Transverse colon (tissue), 4 donors: ENCODE measurements at regions of chr14 and their contacts with region 1.

Region 1: DNA sequence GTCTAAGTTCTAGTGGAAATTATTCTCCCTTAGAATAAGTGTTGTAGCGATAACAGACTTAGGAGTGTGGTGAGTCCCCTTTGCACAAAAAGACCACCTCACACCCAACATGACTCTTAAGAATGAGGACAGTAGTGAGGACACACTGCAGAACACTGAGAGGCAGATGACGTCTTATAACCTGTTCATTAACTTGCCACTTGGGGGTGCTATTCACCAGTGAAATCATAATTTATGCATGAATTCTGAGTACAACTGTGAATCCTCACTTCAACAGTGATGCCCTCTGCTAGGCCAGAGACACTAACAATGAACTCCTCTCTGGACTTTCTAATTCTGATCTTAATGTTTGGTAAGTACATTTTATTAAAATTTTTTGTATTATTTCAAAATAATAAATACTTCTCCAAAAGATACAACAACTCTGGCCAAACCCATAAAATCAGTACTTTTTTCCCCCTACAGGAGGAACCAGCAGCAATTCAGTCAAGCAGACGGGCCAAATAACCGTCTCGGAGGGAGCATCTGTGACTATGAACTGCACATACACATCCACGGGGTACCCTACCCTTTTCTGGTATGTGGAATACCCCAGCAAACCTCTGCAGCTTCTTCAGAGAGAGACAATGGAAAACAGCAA is 274.7 kb downstream of the DAD1 start:
- DNase-seq: no peak
- H3K4me3 ChIP-seq: no peak overlapping the region
- H3K27ac ChIP-seq: no peak overlapping the region
- H3K4me1 ChIP-seq: no peaks in the 10 kb centered on the region
- H3K27me3 ChIP-seq: no peaks in the 10 kb centered on the region
- CTCF ChIP-seq: peak; percentile 50 to 71 (median 62)
- EP300 ChIP-seq: no peak
- POLR2A ChIP-seq: no peak

Region 2: GRCh38 chr14:22338917-22339715 is 24.8 kb after region 1 on chr14:
- in situ Hi-C with region 1: no loop called
- intact Hi-C with region 1: no loop called
- DNase-seq: peak; percentile 67
- H3K4me3 ChIP-seq: no peak overlapping the region
- H3K27ac ChIP-seq: peak overlapping the region; percentile 37 to 69 (median 66)
- H3K4me1 ChIP-seq: peaks cover 0 to 1% (median under 1%) of the 10 kb centered on the region in 4 donors
- H3K27me3 ChIP-seq: no peaks in the 10 kb centered on the region
- CTCF ChIP-seq: no peak
- EP300 ChIP-seq: no peak
- POLR2A ChIP-seq: no peak

Region 3: GRCh38 chr14:22386924-22387775 is 72.8 kb after region 1 on chr14:
- in situ Hi-C with region 1: no loop called
- intact Hi-C with region 1: loop called (anchors 10 kb)
- DNase-seq: peak; percentile 67
- H3K4me3 ChIP-seq: no peak overlapping the region
- H3K27ac ChIP-seq: no peak overlapping the region
- H3K4me1 ChIP-seq: peaks cover 0 to 17% (median 5%) of the 10 kb centered on the region in 4 donors
- H3K27me3 ChIP-seq: peaks cover 5% of the 10 kb centered on the region
- CTCF ChIP-seq: peak; percentile 72 to 87 (median 78)
- EP300 ChIP-seq: no peak
- POLR2A ChIP-seq: no peak

Region 4: GRCh38 chr14:22472935-22473854 is 158.9 kb after region 1 on chr14:
- in situ Hi-C with region 1: loop called in 2 of 4 experiments (anchors 25 kb)
- intact Hi-C with region 1: no loop called
- DNase-seq: peak; percentile 56
- H3K4me3 ChIP-seq: no peak overlapping the region
- H3K27ac ChIP-seq: no peak overlapping the region
- H3K4me1 ChIP-seq: peaks cover 0 to 5% (median 0%) of the 10 kb centered on the region in 4 donors
- H3K27me3 ChIP-seq: no peaks in the 10 kb centered on the region
- CTCF ChIP-seq: peak; percentile 42 to 65 (median 58)
- EP300 ChIP-seq: no peak
- POLR2A ChIP-seq: no peak